Activated CD4-positive, alpha-beta T cell treated with anti-CD3 and anti-CD28 coated beads, Interleukin-2, amount 10 ng/mL, durations not matched to agents 24 days and 14 days (primary cell): ENCODE measurements at regions of chr3 and their contacts with region 1.

Region 1: GRCh38 chr3:49929331-49930240 is at the start of gene MON1A:
- DNase-seq: peak; percentile 98
- H3K4me3 Mint-ChIP-seq: peak within 1 kb of the TSS; percentile 92
- H3K27ac Mint-ChIP-seq: peak within 1 kb of the TSS; percentile 80
- H3K4me1 Mint-ChIP-seq: peaks cover 24% of the 10 kb centered on the region
- H3K27me3 Mint-ChIP-seq: no peaks in the 10 kb centered on the region
- total RNA-seq, gene MON1A: 15.1 and 16.3 TPM in 2 replicates

Region 2: DNA sequence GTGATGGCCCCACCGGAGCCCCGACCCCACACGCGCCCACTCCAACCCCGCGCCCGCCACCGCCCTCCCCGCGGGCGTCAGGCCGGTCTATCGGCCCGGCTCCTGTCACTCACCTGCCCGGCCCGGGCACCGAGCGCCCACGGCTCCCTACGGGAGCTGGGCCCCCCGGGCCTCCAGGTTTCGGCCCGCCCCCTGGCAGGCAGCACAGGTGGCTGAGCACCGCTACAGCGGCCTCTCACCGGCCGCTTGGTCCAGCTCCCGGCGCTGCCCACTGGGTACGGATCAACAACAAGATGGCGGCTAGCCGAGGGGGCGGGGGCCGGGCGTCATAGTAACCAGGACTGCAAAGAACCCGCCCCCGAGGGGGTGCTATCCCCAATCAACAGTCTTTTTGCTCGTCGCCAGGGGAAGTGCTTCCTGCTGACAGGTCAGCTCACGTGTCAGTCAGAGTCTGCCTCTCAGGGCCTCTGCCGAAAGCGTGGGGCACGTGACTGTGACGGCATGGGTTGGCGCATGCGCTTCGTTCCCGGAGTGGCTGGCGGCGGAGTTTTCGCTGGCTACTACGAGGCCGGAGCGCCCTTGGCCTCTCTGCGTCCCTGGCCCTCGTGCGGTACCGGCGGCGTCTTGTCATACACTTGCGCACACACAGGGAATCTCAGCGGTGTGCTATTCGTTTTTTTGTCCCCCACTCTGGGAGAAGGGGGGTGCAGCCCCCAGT is 143.2 kb before region 1 on chr3 and contains the start of gene IP6K1:
- intact Hi-C with region 1: loop called (anchors 5 kb)
- DNase-seq: peak; percentile 100
- H3K4me3 Mint-ChIP-seq: peak within 1 kb of the TSS; percentile 93
- H3K27ac Mint-ChIP-seq: peak within 1 kb of the TSS; percentile 94
- H3K4me1 Mint-ChIP-seq: peaks cover 25% of the 10 kb centered on the region
- H3K27me3 Mint-ChIP-seq: peaks cover 5% of the 10 kb centered on the region
- total RNA-seq, gene IP6K1: 39.6 and 42.2 TPM in 2 replicates

Region 3: DNA sequence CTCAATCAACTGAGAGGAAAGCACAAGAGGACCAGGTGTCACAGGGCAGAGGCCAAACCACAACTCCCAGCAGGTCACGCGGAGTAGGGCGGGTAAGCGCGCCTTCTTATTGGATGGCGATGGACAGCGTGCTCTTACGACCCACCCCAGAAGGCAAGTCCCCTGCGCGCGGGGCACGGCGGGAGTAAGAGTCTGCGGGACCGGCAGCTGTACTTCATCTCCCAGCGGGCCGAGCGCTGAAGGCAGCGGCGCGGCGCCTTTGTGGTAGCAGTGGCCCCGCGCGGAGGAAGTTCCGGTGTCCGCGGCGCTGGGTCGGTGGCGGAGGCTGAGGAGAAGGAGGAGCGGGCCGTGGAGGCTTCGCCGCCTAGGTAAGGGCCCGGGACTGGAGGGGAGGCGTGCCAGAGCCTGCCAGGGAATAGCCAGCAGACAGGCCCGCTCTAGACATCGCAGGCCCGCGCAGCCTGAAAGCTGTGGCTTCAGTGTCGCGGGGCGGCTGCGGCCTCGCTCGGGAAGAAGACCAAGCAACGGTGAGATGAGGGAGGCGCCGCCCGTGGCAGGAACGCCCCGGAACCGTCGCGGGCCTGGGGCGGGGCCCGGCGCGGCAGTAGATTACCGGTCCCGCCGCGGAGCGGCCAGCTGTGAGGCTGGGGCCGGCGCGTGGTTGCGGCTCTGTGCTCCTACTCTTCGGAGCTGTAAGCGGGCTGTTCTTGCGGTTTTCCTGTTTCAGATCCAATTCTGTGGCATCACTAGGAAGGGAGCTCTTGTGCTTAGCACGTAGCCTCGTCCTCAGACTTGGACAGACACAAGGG is 10.5 kb after region 1 on chr3 and contains the start of gene RBM6:
- intact Hi-C with region 1: loop called (anchors 1 kb)
- DNase-seq: peak; percentile 98
- H3K4me3 Mint-ChIP-seq: peak within 1 kb of the TSS; percentile 99
- H3K27ac Mint-ChIP-seq: peak within 1 kb of the TSS; percentile 98
- H3K4me1 Mint-ChIP-seq: peaks cover 24% of the 10 kb centered on the region
- H3K27me3 Mint-ChIP-seq: no peaks in the 10 kb centered on the region
- total RNA-seq, gene RBM6: 95.3 and 100 TPM in 2 replicates

Region 4: GRCh38 chr3:50807266-50807665 is 877.7 kb after region 1 on chr3:
- intact Hi-C with region 1: no loop called
- DNase-seq: no peak
- H3K4me3 Mint-ChIP-seq: no peak overlapping the region
- H3K27ac Mint-ChIP-seq: no peak overlapping the region
- H3K4me1 Mint-ChIP-seq: no peaks in the 10 kb centered on the region
- H3K27me3 Mint-ChIP-seq: peaks cover 3% of the 10 kb centered on the region